GM18951 (cell line): ENCODE measurements at regions of chr15 and their contacts with region 1.

Region 1: DNA sequence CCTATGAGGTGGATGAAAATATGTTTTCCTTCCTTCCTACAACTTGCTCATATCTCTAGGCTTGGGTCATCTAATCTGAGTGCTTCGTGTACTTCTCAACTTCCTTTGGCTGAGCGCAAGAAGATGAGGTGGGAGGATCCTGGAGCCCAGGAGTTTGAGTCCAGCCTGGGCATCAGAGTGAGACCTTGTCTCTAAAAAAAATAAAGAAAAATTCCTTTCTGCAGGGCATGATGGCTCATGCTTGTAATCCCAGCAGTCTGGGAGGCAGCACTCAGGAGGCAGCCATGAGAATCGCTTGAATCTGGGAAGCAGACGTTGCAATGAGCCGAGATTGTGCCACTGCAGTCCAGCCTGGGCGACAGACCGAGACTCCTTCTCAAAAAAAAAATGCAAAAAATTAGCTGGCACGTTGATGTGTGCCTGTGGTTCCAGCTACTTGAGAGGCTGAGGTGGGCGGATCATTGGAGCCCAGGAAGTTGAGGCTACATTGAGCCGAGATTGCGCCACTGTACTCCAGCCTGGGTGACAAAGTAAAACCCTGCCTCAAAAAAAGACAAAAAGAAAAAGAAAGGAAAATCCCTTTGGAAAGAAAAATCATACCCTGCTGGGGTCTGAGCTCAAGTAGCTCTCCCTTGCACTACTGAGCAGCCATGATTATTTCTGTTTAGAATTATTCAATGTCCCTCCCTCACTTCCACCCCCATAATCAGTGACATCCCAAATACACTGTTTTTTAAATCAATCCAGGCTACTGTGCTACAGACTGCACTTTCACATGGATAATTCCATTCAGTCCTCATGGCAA is 28.0 kb upstream of the RAB11A start:
- POLR2A ChIP-seq: no peak

Region 2: GRCh38 chr15:65550681-65551098 is 290.6 kb before region 1 on chr15:
- in situ Hi-C with region 1: no loop called
- POLR2A ChIP-seq: no peak

Region 3: GRCh38 chr15:65619626-65620290 is 221.6 kb before region 1 on chr15:
- in situ Hi-C with region 1: loop called (anchors 10 kb)
- POLR2A ChIP-seq: no peak

Region 4: DNA sequence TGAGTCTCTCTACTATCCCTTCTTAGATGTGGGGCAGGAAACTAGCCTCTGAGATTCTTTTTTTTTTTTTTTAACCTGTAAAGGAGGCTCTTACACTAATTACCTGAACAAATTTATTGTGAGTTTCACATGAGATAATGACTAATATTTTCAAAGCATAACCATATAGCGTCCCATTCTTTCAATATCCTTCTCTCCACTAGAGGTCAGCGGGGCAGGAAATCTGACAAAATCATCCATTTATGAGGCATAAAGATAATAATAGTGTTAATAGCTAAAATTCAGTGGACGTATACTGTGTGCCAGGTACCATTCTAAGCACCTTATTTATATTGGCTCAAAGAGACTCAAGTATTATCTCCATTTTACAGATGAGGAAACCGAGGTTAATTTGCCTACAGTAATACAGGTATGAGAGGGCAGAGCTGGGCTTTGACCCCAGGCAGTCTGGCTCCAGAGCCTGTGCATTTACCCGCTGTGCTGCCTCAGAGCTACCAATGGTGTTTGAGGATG is 844.4 kb after region 1 on chr15:
- in situ Hi-C with region 1: no loop called
- POLR2A ChIP-seq: no peak